HCT116 (cell line): ENCODE measurements at regions of chr7 and their contacts with region 1.

Region 1: DNA sequence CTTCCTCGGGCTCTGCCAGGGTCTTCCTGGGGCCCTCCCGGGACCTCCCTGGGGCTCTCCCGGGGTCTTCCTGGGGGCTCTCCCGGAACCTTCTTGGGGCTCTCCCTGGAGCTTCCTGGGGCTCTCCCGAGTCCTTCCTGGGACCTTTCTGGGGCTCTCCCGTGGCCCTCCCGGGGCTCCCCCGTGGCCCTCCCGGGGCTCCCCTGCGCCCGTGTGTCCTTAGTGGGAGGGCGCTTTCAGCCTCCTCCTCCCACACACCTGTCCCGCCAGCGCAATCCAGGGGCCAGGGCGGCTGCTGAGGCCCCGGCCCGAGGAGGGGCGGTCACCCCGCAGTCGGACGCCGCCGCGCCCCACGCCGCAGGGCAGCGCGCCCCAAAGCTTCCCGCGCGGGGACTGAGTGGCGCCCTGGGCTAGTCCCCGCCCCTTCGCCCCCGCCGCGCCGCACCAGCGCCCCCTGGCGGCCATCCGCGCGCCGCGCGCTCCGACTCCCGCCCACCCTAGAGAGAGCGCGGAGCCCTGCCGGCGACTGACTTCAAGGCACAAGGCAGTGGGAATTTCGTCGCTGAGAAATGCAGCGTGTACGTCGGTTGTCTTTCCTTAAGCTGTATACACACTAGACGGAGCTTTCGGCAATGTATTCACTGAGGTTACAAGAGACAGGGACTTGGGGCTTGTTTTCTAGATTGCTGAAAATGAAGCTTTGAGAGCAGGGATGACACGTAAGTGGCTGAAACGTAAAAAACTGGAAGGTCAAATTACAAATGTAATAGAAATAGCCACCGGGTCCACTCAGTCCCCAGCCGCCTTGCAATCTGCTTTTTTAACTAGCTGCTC is 47.1 kb downstream of the INSIG1 start:
- DNase-seq: peak; percentile 61
- ATAC-seq: peak; percentile 95
- H3K4me3 ChIP-seq: peak overlapping the region in 1 of 2 experiments; percentile 44; a peak in 3 of 4 replicates
- H3K27ac ChIP-seq: peak overlapping the region; percentile 52; the same call in 1 of the 2 replicates
- H3K4me1 ChIP-seq: peaks cover 8 to 10% of the 10 kb centered on the region in 2 experiments; a peak in 3 of 4 replicates
- H3K27me3 ChIP-seq: no peaks in the 10 kb centered on the region
- CTCF ChIP-seq: peak; percentile 72 to 84 (median 74)
- POLR2A ChIP-seq: no peak
- RAD21 ChIP-seq: peak; percentile 91

Region 2: GRCh38 chr7:155003376-155004214 is 341.2 kb before region 1 on chr7:
- CTCF ChIA-PET with region 1: interaction called, 5 read pairs
- POLR2A ChIA-PET with region 1: no interaction called
- RAD21 ChIA-PET with region 1: no interaction called
- intact Hi-C with region 1: loop called (anchors 10 kb)
- DNase-seq: peak; percentile 35
- ATAC-seq: peak; percentile 77
- H3K4me3 ChIP-seq: peak overlapping the region; percentile 66 to 93
- H3K27ac ChIP-seq: peak overlapping the region; percentile 88
- H3K4me1 ChIP-seq: peaks cover 5 to 19% of the 10 kb centered on the region in 2 experiments; a peak in 3 of 4 replicates
- H3K27me3 ChIP-seq: no peaks in the 10 kb centered on the region
- CTCF ChIP-seq: no peak
- POLR2A ChIP-seq: peak; percentile 59
- RAD21 ChIP-seq: no peak

Region 3: GRCh38 chr7:155190688-155191087 is 154.1 kb before region 1 on chr7:
- CTCF ChIA-PET with region 1: interaction called, 6 read pairs
- POLR2A ChIA-PET with region 1: no interaction called
- RAD21 ChIA-PET with region 1: no interaction called
- intact Hi-C with region 1: loop called (anchors 1 kb)
- DNase-seq: no peak
- ATAC-seq: peak; percentile 94
- H3K4me3 ChIP-seq: no peak overlapping the region
- H3K27ac ChIP-seq: no peak overlapping the region
- H3K4me1 ChIP-seq: peaks cover 0 to 3% of the 10 kb centered on the region in 2 experiments; a peak in 1 of 4 replicates
- H3K27me3 ChIP-seq: no peaks in the 10 kb centered on the region
- CTCF ChIP-seq: peak; percentile 82 to 88 (median 84)
- POLR2A ChIP-seq: no peak
- RAD21 ChIP-seq: peak; percentile 96

Region 4: GRCh38 chr7:155363852-155364562 is 19.2 kb after region 1 on chr7:
- CTCF ChIA-PET with region 1: no interaction called
- POLR2A ChIA-PET with region 1: no interaction called
- RAD21 ChIA-PET with region 1: no interaction called
- intact Hi-C with region 1: no loop called
- DNase-seq: no peak
- ATAC-seq: peak; percentile 52; the same call in 1 of the 2 replicates
- H3K4me3 ChIP-seq: no peak overlapping the region
- H3K27ac ChIP-seq: no peak overlapping the region
- H3K4me1 ChIP-seq: no peaks in the 10 kb centered on the region
- H3K27me3 ChIP-seq: no peaks in the 10 kb centered on the region
- CTCF ChIP-seq: 0 out of 6 replicates have a peak, but pooled peaks of 1 of the 3 experiments have one; percentile 7
- POLR2A ChIP-seq: no peak
- RAD21 ChIP-seq: no peak